CD4-positive, alpha-beta memory T cell (primary cell): ENCODE measurements at regions of chr6 and their contacts with region 1.

Region 1: GRCh38 chr6:42390228-42390934 is 61.3 kb downstream of the TRERF1 start:
- DNase-seq: peak; percentile 73 to 79 (median 77)
- H3K4me3 ChIP-seq: peak overlapping the region; percentile 1 to 42
- H3K4me3 Mint-ChIP-seq: peak overlapping the region; percentile 73 to 85 (median 82)
- H3K27ac ChIP-seq: peak overlapping the region; percentile 79
- H3K27ac Mint-ChIP-seq: peak overlapping the region; percentile 96 to 99 (median 98)
- H3K4me1 ChIP-seq: peaks cover 100% of the 10 kb centered on the region
- H3K4me1 Mint-ChIP-seq: peaks cover 76 to 100% (median 90%) of the 10 kb centered on the region in 4 donors
- H3K27me3 ChIP-seq: no peaks in the 10 kb centered on the region
- H3K27me3 Mint-ChIP-seq: no peaks in the 10 kb centered on the region

Region 2: GRCh38 chr6:42374018-42374659 is 16.2 kb before region 1 on chr6:
- CTCF ChIA-PET with region 1: interaction called, 17 read pairs
- POLR2A ChIA-PET with region 1: interaction called, 122 read pairs
- intact Hi-C with region 1: no loop called
- DNase-seq: peak in 1 of 5 donors; percentile 24
- H3K4me3 ChIP-seq: no peak overlapping the region
- H3K4me3 Mint-ChIP-seq: peak overlapping the region in 7 of 8 donors; percentile 9 to 77 (median 57)
- H3K27ac ChIP-seq: no peak overlapping the region
- H3K27ac Mint-ChIP-seq: peak overlapping the region; percentile 41 to 92 (median 85)
- H3K4me1 ChIP-seq: peaks cover 66% of the 10 kb centered on the region
- H3K4me1 Mint-ChIP-seq: peaks cover 39 to 72% (median 54%) of the 10 kb centered on the region in 4 donors
- H3K27me3 ChIP-seq: no peaks in the 10 kb centered on the region
- H3K27me3 Mint-ChIP-seq: no peaks in the 10 kb centered on the region

Region 3: DNA sequence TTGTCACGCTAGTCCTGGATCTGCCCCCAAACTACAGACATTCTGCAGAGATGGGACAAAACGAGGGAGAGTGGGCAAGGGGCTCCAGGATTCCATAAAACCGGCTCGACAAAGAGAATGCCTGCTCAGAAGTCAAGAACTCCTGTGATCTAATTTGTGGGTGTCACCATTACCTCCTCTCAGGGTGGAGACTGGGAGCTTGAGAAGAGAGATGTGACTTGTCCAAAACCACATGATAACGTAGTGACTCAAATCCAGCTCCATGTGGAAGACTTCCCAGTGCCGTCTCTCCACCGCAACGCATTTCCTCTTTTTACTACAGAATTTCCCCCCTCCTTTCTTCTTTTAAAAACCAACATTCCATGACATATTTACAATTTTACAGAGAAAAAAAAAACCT is 17.0 kb after region 1 on chr6:
- CTCF ChIA-PET with region 1: interaction called, 25 read pairs
- POLR2A ChIA-PET with region 1: interaction called, 121 read pairs
- intact Hi-C with region 1: loop called (anchors 2 kb)
- DNase-seq: no peak
- H3K4me3 ChIP-seq: no peak overlapping the region
- H3K4me3 Mint-ChIP-seq: peak overlapping the region; percentile 17 to 75 (median 52)
- H3K27ac ChIP-seq: peak overlapping the region; percentile 8
- H3K27ac Mint-ChIP-seq: peak overlapping the region; percentile 28 to 91 (median 75)
- H3K4me1 ChIP-seq: peaks cover 66% of the 10 kb centered on the region
- H3K4me1 Mint-ChIP-seq: peaks cover 58 to 83% (median 69%) of the 10 kb centered on the region in 4 donors
- H3K27me3 ChIP-seq: no peaks in the 10 kb centered on the region
- H3K27me3 Mint-ChIP-seq: no peaks in the 10 kb centered on the region

Region 4: DNA sequence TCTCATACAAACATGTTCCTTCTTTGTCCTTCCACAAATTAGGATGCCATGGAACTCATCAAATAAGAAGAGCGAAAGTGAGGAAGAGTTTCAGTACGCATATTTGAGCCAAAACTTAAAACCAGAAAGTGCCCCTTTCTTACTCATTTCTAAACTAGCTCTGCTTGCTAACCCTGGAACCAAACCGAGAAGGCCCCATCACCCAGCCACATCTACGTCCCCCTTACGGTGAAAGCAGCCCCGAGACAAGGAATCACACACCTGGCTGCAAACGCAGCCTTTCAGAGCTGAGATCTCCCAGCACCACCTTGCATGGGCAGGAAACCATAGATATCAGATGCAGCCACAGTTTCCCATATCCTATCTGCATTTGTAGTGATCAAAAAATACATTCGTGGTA is 32.9 kb after region 1 on chr6:
- CTCF ChIA-PET with region 1: interaction called, 17 read pairs
- POLR2A ChIA-PET with region 1: interaction called, 51 read pairs
- intact Hi-C with region 1: loop called (anchors 5 kb)
- DNase-seq: peak in 2 of 5 donors; percentile 22 to 45
- H3K4me3 ChIP-seq: peak overlapping the region in 1 of 2 donors; percentile 59
- H3K4me3 Mint-ChIP-seq: peak overlapping the region; percentile 84 to 96 (median 88)
- H3K27ac ChIP-seq: no peak overlapping the region
- H3K27ac Mint-ChIP-seq: peak overlapping the region; percentile 21 to 92 (median 85)
- H3K4me1 ChIP-seq: peaks cover 70% of the 10 kb centered on the region
- H3K4me1 Mint-ChIP-seq: peaks cover 50 to 81% (median 65%) of the 10 kb centered on the region in 4 donors
- H3K27me3 ChIP-seq: no peaks in the 10 kb centered on the region
- H3K27me3 Mint-ChIP-seq: no peaks in the 10 kb centered on the region

Region 5: GRCh38 chr6:42440778-42441696 is 50.7 kb after region 1 on chr6:
- CTCF ChIA-PET with region 1: interaction called, 6 read pairs
- POLR2A ChIA-PET with region 1: interaction called, 238 read pairs
- intact Hi-C with region 1: no loop called
- DNase-seq: peak in 1 of 5 donors; percentile 71
- H3K4me3 ChIP-seq: peak overlapping the region in 1 of 2 donors; percentile 11
- H3K4me3 Mint-ChIP-seq: peak overlapping the region; percentile 74 to 96 (median 82)
- H3K27ac ChIP-seq: peak overlapping the region; percentile 37
- H3K27ac Mint-ChIP-seq: peak overlapping the region; percentile 77 to 94 (median 86)
- H3K4me1 ChIP-seq: peaks cover 75% of the 10 kb centered on the region
- H3K4me1 Mint-ChIP-seq: peaks cover 45 to 83% (median 65%) of the 10 kb centered on the region in 4 donors
- H3K27me3 ChIP-seq: no peaks in the 10 kb centered on the region
- H3K27me3 Mint-ChIP-seq: no peaks in the 10 kb centered on the region